Activated CD8-positive, alpha-beta T cell treated with anti-CD3 and anti-CD28 coated beads, Interleukin-2, amount 10 ng/mL, durations not matched to agents 7 days and 5 days (primary cell): ENCODE measurements at regions of chr9 and their contacts with region 1.

Region 1: DNA sequence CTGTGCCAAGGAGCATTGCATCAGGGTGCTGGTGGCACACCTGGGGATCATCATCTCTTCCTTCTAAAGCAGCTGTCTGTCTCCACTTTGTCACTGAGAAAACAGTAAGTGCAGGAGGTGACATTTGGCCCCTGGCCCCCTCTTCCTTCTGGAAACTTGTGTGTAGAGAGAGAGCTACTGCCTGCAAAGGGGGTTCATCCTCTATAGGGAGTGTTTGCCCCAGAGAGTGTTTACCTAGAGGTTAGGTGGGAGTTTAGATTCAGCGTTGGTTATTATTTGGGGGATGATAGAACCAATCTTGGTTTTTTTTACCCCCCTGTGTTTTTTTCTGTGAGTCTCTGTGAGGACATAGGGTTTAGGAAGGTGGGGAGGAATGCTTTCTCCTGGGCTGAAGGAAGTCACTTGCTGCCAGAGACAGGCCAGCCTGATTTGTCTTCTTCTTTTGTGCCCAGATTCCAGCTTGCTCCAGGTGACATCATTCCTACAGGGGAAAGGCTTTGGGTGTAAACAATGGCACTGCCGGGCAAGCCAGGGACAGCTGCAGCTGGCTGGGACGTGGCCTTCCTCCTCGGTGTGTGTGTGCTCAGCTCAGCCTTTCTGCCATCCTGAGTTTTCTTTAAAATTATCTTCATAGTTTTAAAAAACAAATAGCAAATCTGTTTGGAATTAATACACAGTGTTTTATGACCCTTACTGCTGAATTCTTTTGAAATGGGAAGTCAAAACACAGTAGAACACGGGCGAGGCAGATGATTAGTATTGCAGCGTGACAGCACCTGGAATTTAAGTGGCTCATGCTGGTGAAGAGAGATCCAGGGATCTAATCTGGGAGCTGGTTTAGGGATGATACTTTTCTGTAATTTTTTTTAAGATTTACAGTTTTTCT is 24.5 kb downstream of the PRRC2B start:
- DNase-seq: no peak
- ATAC-seq: no peak
- H3K4me3 Mint-ChIP-seq: peak overlapping the region; percentile 66
- H3K27ac Mint-ChIP-seq: peak overlapping the region; percentile 86
- H3K4me1 Mint-ChIP-seq: peaks cover 92% of the 10 kb centered on the region
- H3K27me3 Mint-ChIP-seq: no peaks in the 10 kb centered on the region

Region 2: GRCh38 chr9:131366761-131367401 is 51.5 kb before region 1 on chr9:
- CTCF ChIA-PET with region 1: interaction called, 12 read pairs
- POLR2A ChIA-PET with region 1: no interaction called
- DNase-seq: no peak
- ATAC-seq: no peak
- H3K4me3 Mint-ChIP-seq: no peak overlapping the region
- H3K27ac Mint-ChIP-seq: no peak overlapping the region
- H3K4me1 Mint-ChIP-seq: peaks cover 1% of the 10 kb centered on the region
- H3K27me3 Mint-ChIP-seq: no peaks in the 10 kb centered on the region

Region 3: GRCh38 chr9:131395157-131396098 is 23.0 kb before region 1 on chr9:
- CTCF ChIA-PET with region 1: interaction called, 20 read pairs
- POLR2A ChIA-PET with region 1: interaction called, 3 read pairs
- DNase-seq: peak; percentile 87
- ATAC-seq: peak; percentile 67
- H3K4me3 Mint-ChIP-seq: peak overlapping the region; percentile 97
- H3K27ac Mint-ChIP-seq: peak overlapping the region; percentile 84
- H3K4me1 Mint-ChIP-seq: peaks cover 66% of the 10 kb centered on the region
- H3K27me3 Mint-ChIP-seq: peaks cover 5% of the 10 kb centered on the region

Region 4: DNA sequence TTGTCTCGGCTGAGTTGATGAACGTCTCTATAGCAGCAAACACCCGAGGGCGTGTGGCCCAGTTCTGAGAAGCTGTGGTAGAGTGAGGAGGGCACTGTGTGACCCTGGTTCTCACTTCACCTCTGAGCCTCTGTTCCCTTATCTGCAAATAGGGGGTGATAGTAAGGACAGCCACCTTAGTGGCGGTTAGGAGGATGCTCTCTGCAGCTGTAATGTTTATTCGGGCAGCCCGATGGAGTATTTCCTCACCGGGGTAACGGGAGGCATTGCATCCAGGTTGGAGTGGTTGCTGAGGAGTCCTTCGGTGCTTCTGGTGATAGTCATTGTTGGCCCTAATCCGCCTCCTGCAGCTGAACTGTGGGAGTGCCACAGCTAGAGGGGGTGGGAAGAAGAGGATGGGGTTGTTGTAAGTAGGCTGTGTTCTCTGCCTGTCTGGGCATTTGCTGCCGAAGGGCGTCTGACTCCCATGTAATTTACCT is 10.6 kb before region 1 on chr9:
- CTCF ChIA-PET with region 1: interaction called, 17 read pairs
- POLR2A ChIA-PET with region 1: interaction called, 20 read pairs
- DNase-seq: peak; percentile 69
- ATAC-seq: peak; percentile 74
- H3K4me3 Mint-ChIP-seq: peak overlapping the region; percentile 76
- H3K27ac Mint-ChIP-seq: peak overlapping the region; percentile 76
- H3K4me1 Mint-ChIP-seq: peaks cover 85% of the 10 kb centered on the region
- H3K27me3 Mint-ChIP-seq: no peaks in the 10 kb centered on the region

Region 5: GRCh38 chr9:131483319-131484050 is 65.1 kb after region 1 on chr9:
- CTCF ChIA-PET with region 1: no interaction called
- POLR2A ChIA-PET with region 1: no interaction called
- DNase-seq: no peak
- ATAC-seq: no peak
- H3K4me3 Mint-ChIP-seq: no peak overlapping the region
- H3K27ac Mint-ChIP-seq: no peak overlapping the region
- H3K4me1 Mint-ChIP-seq: no peaks in the 10 kb centered on the region
- H3K27me3 Mint-ChIP-seq: no peaks in the 10 kb centered on the region